HepG2 (cell line): ENCODE measurements at regions of chr1 and their contacts with region 1.

Region 1: DNA sequence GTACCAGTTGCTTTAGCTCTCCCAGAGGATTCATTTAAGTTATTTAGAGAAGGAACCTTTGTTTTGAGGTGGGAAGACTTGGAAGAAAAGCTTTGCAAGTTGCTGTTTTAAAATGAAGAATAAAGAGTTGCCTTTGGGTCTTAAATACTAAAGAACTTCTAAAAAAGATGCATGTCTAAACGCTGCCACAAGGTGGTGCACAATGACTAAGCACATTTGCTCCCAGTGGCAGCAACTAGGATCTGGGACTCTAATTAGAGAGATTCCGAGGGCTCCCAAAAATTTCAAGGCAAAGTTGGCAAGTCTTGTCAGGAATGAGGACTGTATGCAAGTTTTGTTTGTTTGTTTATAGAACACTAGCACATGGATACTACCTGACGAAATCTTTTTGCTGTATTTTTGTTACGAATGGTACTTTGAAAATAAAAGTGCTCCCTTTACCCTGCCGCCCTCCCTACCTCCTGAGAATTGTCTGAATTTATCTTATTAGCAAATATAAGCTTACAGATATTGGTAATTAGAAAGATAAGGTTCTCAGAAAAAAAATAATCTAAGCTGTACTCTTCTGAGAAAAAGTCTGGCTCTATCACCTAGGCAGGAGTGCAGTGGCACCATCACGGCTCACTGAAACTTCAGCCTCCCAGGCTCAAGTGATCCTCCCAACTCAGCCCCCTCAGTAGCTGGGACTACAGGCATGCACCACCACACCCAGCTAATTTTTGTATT is 121.8 kb downstream of the HFM1 start:
- DNase-seq: peak; percentile 64
- ATAC-seq: peak; percentile 79
- H3K4me3 ChIP-seq: no peak overlapping the region
- H3K27ac ChIP-seq: no peak overlapping the region
- H3K4me1 ChIP-seq: no peaks in the 10 kb centered on the region
- H3K27me3 ChIP-seq: no peaks in the 10 kb centered on the region
- CTCF ChIP-seq: peak; percentile 71
- EP300 ChIP-seq: no peak
- POLR2A ChIP-seq: no peak
- RAD21 ChIP-seq: peak; percentile 52; the same call in 1 of the 2 replicates

Region 2: GRCh38 chr1:91173346-91173890 is 109.4 kb before region 1 on chr1:
- CTCF ChIA-PET with region 1: no interaction called
- POLR2A ChIA-PET with region 1: no interaction called
- in situ Hi-C with region 1: loop called (anchors 5 kb)
- intact Hi-C with region 1: no loop called
- DNase-seq: no peak
- ATAC-seq: no peak
- H3K4me3 ChIP-seq: no peak overlapping the region
- H3K27ac ChIP-seq: no peak overlapping the region
- H3K4me1 ChIP-seq: no peaks in the 10 kb centered on the region
- H3K27me3 ChIP-seq: peaks cover 0 to 4% of the 10 kb centered on the region in 2 experiments; a peak in 1 of 5 replicates
- CTCF ChIP-seq: no peak
- EP300 ChIP-seq: no peak
- POLR2A ChIP-seq: no peak
- RAD21 ChIP-seq: no peak

Region 3: DNA sequence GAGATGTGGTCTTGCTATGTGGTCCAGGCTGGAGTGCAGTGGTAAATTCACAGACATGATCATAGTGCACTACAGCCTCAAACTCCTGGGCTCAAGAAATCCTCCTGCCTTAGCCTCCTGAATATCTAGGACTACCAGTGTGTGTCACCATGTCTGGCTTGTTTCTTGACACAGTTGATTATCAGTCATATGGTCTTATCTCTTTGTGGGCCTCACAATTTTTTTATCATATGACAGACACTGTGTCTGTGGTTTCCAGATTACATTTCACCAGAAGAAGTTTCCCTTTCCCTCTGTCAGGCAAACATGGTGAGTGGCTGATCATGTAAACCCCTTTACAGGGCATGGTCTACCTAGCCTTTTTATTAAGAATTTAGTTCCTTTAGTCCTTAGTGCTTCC is 25.7 kb after region 1 on chr1:
- CTCF ChIA-PET with region 1: no interaction called
- POLR2A ChIA-PET with region 1: no interaction called
- in situ Hi-C with region 1: no loop called
- intact Hi-C with region 1: no loop called
- DNase-seq: no peak
- ATAC-seq: no peak
- H3K4me3 ChIP-seq: no peak overlapping the region
- H3K27ac ChIP-seq: no peak overlapping the region
- H3K4me1 ChIP-seq: no peaks in the 10 kb centered on the region
- H3K27me3 ChIP-seq: no peaks in the 10 kb centered on the region
- CTCF ChIP-seq: no peak
- EP300 ChIP-seq: no peak
- POLR2A ChIP-seq: no peak
- RAD21 ChIP-seq: no peak

Region 4: DNA sequence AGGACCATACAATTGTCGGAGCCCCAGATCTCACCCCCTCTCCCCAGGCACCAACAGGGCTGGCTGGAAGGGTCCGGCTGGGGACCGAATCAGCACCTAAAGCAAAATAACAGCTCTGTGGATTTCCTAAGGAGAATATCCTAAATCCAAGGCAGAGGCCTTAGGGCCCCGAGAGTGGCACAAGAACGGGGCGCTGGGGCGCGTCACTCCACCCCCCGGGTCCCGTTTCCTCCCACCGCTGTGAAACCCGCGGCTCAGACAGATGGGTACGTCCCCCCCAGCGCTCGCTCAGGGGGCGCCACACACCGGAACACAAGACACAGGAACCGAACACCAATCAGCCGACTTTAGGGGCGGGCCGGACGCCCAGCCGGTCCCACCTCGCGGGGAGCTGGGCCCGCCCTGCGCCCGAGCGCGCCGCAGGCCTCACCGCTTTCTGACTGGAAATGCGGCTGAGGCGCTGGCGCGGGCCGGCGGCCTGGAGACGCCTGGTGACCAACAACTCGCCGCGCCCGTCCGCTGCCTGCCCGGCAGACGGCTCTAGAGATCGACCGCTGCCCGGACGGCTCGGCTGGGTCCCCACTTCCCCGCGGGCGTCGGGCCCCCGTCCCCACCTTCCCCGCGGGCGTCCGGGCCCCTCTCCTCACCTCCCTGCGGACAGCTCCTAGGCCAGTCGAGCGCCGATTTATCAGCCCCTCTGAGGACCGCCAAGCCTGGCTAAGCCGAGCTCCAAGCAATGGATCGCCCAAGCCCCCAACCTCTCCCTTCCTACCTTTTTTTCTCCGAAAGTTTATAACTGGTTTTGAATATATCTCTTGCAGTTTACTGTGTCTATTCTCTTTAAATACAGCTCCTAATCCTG is 121.5 kb after region 1 on chr1 and contains the start of gene HFM1:
- CTCF ChIA-PET with region 1: interaction called, 7 read pairs
- POLR2A ChIA-PET with region 1: no interaction called
- in situ Hi-C with region 1: loop called (anchors 5 kb)
- intact Hi-C with region 1: loop called (anchors 1 kb)
- DNase-seq: peak; percentile 59
- ATAC-seq: peak; percentile 99
- H3K4me3 ChIP-seq: peak within 1 kb of the TSS; percentile 60 to 76 (median 70)
- H3K27ac ChIP-seq: no peak within 1 kb of the TSS
- H3K4me1 ChIP-seq: no peaks in the 10 kb centered on the region
- H3K27me3 ChIP-seq: peaks cover 0 to 10% of the 10 kb centered on the region in 2 experiments; a peak in 1 of 5 replicates
- CTCF ChIP-seq: peak; percentile 47
- EP300 ChIP-seq: no peak
- POLR2A ChIP-seq: no peak
- RAD21 ChIP-seq: no peak
- total RNA-seq, gene HFM1: 0.29 and 1.4 TPM in 2 replicates

Region 5: GRCh38 chr1:91500756-91501522 is 218.1 kb after region 1 on chr1 and contains the start of gene CDC7:
- CTCF ChIA-PET with region 1: no interaction called
- POLR2A ChIA-PET with region 1: no interaction called
- in situ Hi-C with region 1: no loop called
- intact Hi-C with region 1: loop called (anchors 1 kb)
- DNase-seq: peak; percentile 86
- ATAC-seq: peak; percentile 18
- H3K4me3 ChIP-seq: peak within 1 kb of the TSS; percentile 49 to 69 (median 51); a peak in 5 of 6 replicates
- H3K27ac ChIP-seq: peak within 1 kb of the TSS; percentile 81
- H3K4me1 ChIP-seq: peaks cover 23% of the 10 kb centered on the region
- H3K27me3 ChIP-seq: no peaks in the 10 kb centered on the region
- CTCF ChIP-seq: peak; percentile 53
- EP300 ChIP-seq: no peak
- POLR2A ChIP-seq: peak; percentile 14 to 19; a peak in 2 of 4 replicates
- RAD21 ChIP-seq: peak; percentile 35
- total RNA-seq, gene CDC7: 12.6 and 19.2 TPM in 2 replicates